Endothelial cell of umbilical vein (primary cell): ENCODE measurements at regions of chr5 and their contacts with region 1.

Region 1: GRCh38 chr5:72611118-72611730 is 104.0 kb upstream of the ZNF366 start:
- DNase-seq: peak; percentile 85
- H3K4me3 ChIP-seq: no peak overlapping the region
- H3K27ac ChIP-seq: peak overlapping the region; percentile 23
- H3K4me1 ChIP-seq: peaks cover 5% of the 10 kb centered on the region
- H3K27me3 ChIP-seq: no peaks in the 10 kb centered on the region
- CTCF ChIP-seq: peak; percentile 98
- POLR2A ChIP-seq: no peak

Region 2: GRCh38 chr5:72587661-72588308 is 23.4 kb before region 1 on chr5:
- CTCF ChIA-PET with region 1: interaction called, 18 read pairs
- POLR2A ChIA-PET with region 1: no interaction called
- dilution Hi-C with region 1: no loop called
- intact Hi-C with region 1: no loop called
- DNase-seq: peak; percentile 46
- H3K4me3 ChIP-seq: no peak overlapping the region
- H3K27ac ChIP-seq: peak overlapping the region; percentile 40
- H3K4me1 ChIP-seq: peaks cover 21% of the 10 kb centered on the region
- H3K27me3 ChIP-seq: no peaks in the 10 kb centered on the region
- CTCF ChIP-seq: no peak
- POLR2A ChIP-seq: no peak

Region 3: DNA sequence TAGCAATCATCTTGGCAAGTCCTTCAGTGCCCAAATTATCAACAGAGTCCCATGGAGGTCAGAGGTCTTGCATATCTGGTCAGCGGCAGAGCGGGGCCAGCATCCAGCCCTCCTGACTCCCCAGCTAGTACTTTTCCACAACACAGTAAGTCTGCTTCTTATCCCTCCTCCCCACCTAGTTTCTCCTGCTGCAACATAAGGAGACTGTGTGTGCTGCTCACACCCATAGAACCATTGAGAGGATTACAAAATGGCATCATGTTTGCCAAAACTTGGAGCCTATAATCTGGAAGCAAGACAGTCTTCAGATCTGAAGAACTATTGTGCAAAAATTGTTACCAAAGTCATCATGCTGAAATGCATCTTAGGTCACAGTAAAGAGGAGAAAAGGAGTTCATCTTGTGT is 21.8 kb after region 1 on chr5:
- CTCF ChIA-PET with region 1: interaction called, 12 read pairs
- POLR2A ChIA-PET with region 1: no interaction called
- dilution Hi-C with region 1: no loop called
- intact Hi-C with region 1: no loop called
- DNase-seq: no peak
- H3K4me3 ChIP-seq: no peak overlapping the region
- H3K27ac ChIP-seq: no peak overlapping the region
- H3K4me1 ChIP-seq: peaks cover 5% of the 10 kb centered on the region
- H3K27me3 ChIP-seq: no peaks in the 10 kb centered on the region
- CTCF ChIP-seq: no peak
- POLR2A ChIP-seq: no peak

Region 4: GRCh38 chr5:72799721-72800120 is 188.5 kb after region 1 on chr5:
- CTCF ChIA-PET with region 1: interaction called, 12 read pairs
- POLR2A ChIA-PET with region 1: no interaction called
- dilution Hi-C with region 1: no loop called
- intact Hi-C with region 1: no loop called
- DNase-seq: peak; percentile 93
- H3K4me3 ChIP-seq: no peak overlapping the region
- H3K27ac ChIP-seq: peak overlapping the region; percentile 8
- H3K4me1 ChIP-seq: peaks cover 11% of the 10 kb centered on the region
- H3K27me3 ChIP-seq: no peaks in the 10 kb centered on the region
- CTCF ChIP-seq: no peak
- POLR2A ChIP-seq: no peak

Region 5: GRCh38 chr5:72847989-72848473 is 236.8 kb after region 1 on chr5:
- CTCF ChIA-PET with region 1: interaction called, 23 read pairs
- POLR2A ChIA-PET with region 1: no interaction called
- dilution Hi-C with region 1: no loop called
- intact Hi-C with region 1: no loop called
- DNase-seq: peak; percentile 93
- H3K4me3 ChIP-seq: peak overlapping the region; percentile 62 to 99 (median 97)
- H3K27ac ChIP-seq: peak overlapping the region; percentile 90
- H3K4me1 ChIP-seq: peaks cover 58% of the 10 kb centered on the region
- H3K27me3 ChIP-seq: no peaks in the 10 kb centered on the region
- CTCF ChIP-seq: no peak
- POLR2A ChIP-seq: peak; percentile 92

Region 6: DNA sequence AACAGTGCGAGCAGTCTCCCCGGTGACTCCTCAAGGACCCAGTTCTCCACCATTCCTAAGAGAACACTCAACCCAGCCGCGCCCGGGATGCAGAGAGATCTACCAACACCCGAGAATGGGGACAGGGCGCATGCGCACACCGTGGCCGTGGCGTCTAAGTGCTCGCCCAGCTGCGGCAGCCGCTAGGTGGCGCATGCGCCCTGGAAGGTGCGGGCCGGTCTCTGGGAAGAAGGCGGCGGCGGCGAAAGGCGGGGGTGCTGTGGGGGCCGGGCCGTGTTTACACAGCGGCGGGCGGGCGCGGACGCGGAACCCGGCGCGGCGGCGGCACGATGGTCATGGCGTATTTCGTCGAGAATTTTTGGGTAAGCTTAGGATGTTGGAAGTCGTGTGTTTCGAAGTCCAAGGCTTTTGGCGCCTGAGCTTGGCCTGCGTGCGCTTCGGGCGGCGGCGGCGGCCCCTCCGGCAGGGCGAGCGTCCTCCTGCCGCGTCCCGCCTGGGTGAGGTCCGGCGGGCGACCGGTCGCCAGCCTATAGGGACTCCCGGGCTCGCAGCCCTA is 344.6 kb after region 1 on chr5 and contains the start of gene FCHO2:
- CTCF ChIA-PET with region 1: no interaction called
- POLR2A ChIA-PET with region 1: no interaction called
- dilution Hi-C with region 1: no loop called
- intact Hi-C with region 1: no loop called
- DNase-seq: peak; percentile 95
- H3K4me3 ChIP-seq: peak within 1 kb of the TSS; percentile 69 to 96 (median 92)
- H3K27ac ChIP-seq: peak within 1 kb of the TSS; percentile 93
- H3K4me1 ChIP-seq: peaks cover 50% of the 10 kb centered on the region
- H3K27me3 ChIP-seq: no peaks in the 10 kb centered on the region
- CTCF ChIP-seq: peak; percentile 78 to 88
- POLR2A ChIP-seq: peak; percentile 61
- total RNA-seq, gene FCHO2: 23.7 and 25.2 TPM in 2 replicates